ENCODE measurements at regions of chr17 and their contacts with region 1.

Region 1: DNA sequence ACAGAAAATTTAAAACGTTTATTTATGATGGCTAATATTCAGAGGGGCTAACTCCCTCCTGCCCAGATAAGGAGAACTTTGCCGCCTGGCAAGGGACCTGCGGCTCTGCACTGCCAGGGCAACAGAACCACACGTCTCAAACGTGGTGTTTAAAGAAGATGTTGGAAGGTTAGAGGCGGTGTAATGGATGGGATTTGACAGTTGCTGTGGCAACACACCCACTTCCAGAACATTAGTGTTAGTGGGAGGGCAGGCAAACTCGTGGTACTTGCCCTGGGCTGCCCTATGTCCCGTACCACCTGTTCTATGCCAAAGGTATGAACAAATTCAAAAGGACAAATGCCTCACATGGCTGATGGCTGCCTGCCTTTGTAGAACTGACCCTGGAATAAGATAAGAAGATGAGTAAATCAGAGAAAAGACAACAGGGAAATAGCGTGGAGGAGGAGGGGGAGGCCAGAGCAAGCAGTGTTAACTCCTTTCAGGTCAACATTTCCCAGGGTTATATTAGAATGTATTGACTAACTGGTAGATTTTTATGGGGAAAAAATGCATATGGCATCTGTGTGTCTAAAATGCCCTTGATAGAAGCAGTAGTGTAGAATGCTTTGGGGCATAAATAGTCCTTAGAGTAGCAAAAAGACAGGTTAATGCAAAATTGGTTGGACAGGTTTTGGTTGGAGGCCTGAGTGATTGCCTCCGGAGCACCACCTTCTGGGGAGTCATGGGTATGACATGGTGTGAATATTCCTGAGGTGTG is 30.8 kb downstream of the HLF start:
- DNase-seq: peak in 1 of 2 donors; percentile 42
- ATAC-seq: peak; percentile 73 to 92 (median 84)
- H3K4me3 ChIP-seq: no peak overlapping the region
- H3K27ac ChIP-seq: peak overlapping the region in 5 of 10 donors; percentile 25 to 42 (median 38)
- H3K4me1 ChIP-seq: peaks cover 0 to 30% (median 12%) of the 10 kb centered on the region in 9 donors
- H3K27me3 ChIP-seq: no peaks in the 10 kb centered on the region
- CTCF ChIP-seq: peak; percentile 80 to 89 (median 87)

Region 2: DNA sequence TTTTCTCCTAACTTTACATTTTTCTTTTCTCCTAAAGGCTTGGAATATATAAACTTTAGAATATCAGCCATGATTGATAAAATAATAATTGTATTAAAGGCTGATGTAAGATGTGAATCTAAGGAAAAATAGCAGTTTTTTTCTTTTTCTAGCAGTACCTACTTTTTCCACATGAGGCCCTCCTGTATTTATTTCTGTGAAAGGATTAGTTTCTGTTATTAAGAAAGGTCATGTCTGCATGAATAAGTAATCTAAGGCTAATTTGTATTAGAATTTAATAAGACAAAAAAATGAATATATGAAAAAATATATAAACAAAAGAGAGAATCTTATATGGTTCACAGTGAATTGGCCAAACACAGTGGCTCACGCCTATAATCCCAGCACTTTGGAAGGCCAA is 241.7 kb before region 1 on chr17:
- intact Hi-C with region 1: loop called in 2 of 10 experiments (anchors 5 to 10 kb)
- DNase-seq: no peak
- ATAC-seq: no peak
- H3K4me3 ChIP-seq: no peak overlapping the region
- H3K27ac ChIP-seq: no peak overlapping the region
- H3K4me1 ChIP-seq: no peaks in the 10 kb centered on the region
- H3K27me3 ChIP-seq: no peaks in the 10 kb centered on the region
- CTCF ChIP-seq: peak in 7 of 9 donors; percentile 35 to 54 (median 42)

Region 3: DNA sequence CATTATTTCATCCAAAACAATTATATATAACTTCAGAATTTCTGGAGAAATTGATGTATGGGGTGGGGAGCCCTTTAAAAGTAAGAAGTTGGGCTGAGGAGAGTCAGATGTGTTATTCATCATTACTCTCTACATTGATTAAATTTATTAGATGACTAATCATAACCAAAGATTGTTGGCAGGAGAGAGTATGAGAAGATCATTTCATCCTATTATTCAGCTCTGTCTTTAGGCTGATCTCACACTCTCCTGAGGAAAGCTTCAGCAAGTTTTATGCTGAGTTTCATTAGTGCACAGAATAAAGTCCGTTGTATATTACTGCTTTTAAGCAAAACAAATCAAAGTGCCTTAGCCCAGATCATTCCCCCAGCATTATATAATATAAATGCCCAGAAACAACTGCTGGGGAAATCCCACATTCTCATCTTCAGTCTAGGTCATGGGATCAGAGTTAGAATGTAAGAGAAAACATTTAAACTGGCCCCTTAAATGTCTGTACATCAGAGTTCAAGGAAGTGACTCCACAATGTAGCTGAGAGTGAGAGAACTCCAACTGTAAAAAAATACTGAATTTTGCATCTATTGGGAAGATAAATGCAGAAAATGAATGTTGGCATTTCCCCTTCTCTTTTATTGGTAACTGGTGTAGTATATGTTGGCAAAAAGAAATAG is 161.0 kb before region 1 on chr17:
- intact Hi-C with region 1: loop called in 1 of 10 experiments (anchors 10 kb)
- DNase-seq: no peak
- ATAC-seq: no peak
- H3K4me3 ChIP-seq: no peak overlapping the region
- H3K27ac ChIP-seq: no peak overlapping the region
- H3K4me1 ChIP-seq: no peaks in the 10 kb centered on the region
- H3K27me3 ChIP-seq: no peaks in the 10 kb centered on the region
- CTCF ChIP-seq: no peak

Region 4: DNA sequence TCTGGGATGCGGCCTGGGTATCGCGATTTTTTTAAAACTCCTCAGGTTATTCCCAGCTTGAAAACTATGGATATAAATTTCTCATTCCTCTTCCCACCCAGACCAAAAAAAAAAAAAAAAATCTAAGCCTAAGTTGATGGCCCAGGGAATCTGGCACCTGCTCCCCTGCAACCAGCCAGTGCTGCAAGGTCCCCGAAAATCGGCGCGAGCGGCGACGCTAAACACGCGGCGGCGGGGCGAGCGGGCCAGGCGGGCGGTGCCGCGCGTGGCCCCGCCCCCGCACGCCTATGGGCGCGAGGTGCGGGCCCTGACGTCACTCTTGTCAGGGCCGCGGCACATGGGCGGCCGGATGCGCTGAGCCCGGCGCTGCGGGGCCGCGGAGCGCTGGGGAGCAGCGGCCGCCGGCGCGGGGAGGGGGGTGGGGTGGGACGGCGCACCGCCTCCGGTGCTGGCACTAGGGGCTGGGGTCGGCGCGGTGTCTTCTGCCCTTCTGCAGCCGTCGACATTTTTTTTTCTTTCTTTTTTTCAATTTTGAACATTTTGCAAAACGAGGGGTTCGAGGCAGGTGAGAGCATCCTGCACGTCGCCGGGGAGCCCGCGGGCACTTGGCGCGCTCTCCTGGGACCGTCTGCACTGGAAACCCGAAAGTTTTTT is 30.8 kb before region 1 on chr17 and contains the start of gene HLF:
- intact Hi-C with region 1: loop called in 4 of 10 experiments (anchors 2 kb)
- DNase-seq: peak; percentile 82 to 85
- ATAC-seq: peak; percentile 87 to 99 (median 96)
- H3K4me3 ChIP-seq: peak within 1 kb of the TSS; percentile 59 to 78 (median 64)
- H3K27ac ChIP-seq: peak within 1 kb of the TSS; percentile 48 to 89 (median 84)
- H3K4me1 ChIP-seq: peaks cover 4 to 58% (median 32%) of the 10 kb centered on the region in 9 donors
- H3K27me3 ChIP-seq: peaks cover 0 to 72% (median 5%) of the 10 kb centered on the region in 7 donors
- CTCF ChIP-seq: no peak
- total RNA-seq, gene HLF: 11.2 to 42.5 (median 31.3) TPM